Dorsolateral prefrontal cortex (tissue), 120 donors: ENCODE measurements at regions of chr2 and their contacts with region 1.

Region 1: DNA sequence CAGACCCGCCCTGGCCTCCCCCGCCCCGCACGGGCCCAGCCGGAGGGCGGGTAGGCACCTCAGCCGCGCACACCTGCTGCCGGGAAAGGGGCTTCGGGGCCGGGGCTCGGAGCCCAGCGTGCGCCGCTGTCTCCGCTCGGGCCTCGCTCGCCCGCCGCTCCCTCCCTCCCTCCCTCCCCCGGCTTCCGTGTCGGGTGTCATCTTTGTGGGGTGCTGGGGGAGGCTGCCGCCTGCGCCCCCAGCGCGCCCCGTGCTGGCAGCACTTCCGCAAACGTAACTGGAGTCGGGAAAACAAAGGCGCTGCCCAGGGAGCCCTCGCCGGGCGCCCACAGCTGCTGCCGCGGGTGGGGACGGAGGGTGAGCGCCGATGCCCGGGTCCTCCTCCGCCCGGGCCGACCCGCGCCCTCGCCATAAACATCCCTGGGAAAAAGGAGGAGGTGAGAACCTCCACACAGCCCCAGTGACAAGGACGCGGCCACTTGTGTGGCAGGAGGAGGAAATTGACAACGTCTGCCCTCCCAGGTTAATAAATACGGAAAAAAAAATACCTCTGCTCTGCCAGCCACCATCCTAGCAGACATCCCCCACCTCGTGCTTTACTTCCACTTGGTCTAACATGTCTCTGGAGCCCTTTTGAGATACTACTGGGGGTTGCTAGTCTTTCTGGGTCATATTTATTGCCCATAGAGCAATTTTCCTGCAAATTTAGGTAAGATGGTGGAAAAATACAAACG is 550 bp downstream of the MFSD6 start:
- DNase-seq: peak; percentile 45 to 87 (median 78)
- H3K4me3 ChIP-seq: peak overlapping the region; percentile 61 to 91 (median 79)
- H3K27ac ChIP-seq: peak overlapping the region; percentile 72 to 100 (median 97)
- H3K27me3 ChIP-seq: no peaks in the 10 kb centered on the region
- CTCF ChIP-seq: peak in 21 of 56 donors; percentile 4 to 31 (median 20)

Region 2: GRCh38 chr2:189966481-189966880 is 442.2 kb before region 1 on chr2:
- intact Hi-C with region 1: no loop called
- DNase-seq: no peak
- H3K4me3 ChIP-seq: no peak overlapping the region
- H3K27ac ChIP-seq: no peak overlapping the region
- H3K27me3 ChIP-seq: no peaks in the 10 kb centered on the region
- CTCF ChIP-seq: no peak

Region 3: DNA sequence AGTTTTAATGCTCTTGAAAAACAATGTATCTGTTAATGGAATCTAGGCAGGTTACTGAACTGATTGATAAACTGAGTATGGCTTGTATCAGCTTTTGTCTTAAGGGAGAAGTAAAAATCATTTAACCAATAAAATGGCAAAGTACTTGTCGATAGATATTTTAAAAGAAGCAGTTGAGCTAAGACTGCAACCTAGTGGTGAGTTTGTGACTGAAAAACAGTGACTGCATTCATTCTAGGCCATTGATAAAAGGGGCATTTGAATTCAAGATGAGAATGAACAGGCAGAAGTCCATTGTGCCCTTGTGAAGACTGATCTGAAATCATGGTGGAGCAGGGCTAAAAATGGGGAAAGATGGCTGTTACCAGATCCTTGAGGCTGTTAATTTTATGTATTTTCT is 286.7 kb before region 1 on chr2:
- intact Hi-C with region 1: no loop called
- DNase-seq: no peak
- H3K4me3 ChIP-seq: no peak overlapping the region
- H3K27ac ChIP-seq: peak overlapping the region in 48 of 59 donors; percentile 1 to 85 (median 62)
- H3K27me3 ChIP-seq: no peaks in the 10 kb centered on the region
- CTCF ChIP-seq: peak; percentile 30 to 84 (median 63)

Region 4: GRCh38 chr2:190369635-190370034 is 39.1 kb before region 1 on chr2:
- intact Hi-C with region 1: loop called (anchors 5 kb)
- DNase-seq: no peak
- H3K4me3 ChIP-seq: no peak overlapping the region
- H3K27ac ChIP-seq: peak overlapping the region in 34 of 59 donors; percentile 1 to 84 (median 66)
- H3K27me3 ChIP-seq: no peaks in the 10 kb centered on the region
- CTCF ChIP-seq: no peak

Region 5: DNA sequence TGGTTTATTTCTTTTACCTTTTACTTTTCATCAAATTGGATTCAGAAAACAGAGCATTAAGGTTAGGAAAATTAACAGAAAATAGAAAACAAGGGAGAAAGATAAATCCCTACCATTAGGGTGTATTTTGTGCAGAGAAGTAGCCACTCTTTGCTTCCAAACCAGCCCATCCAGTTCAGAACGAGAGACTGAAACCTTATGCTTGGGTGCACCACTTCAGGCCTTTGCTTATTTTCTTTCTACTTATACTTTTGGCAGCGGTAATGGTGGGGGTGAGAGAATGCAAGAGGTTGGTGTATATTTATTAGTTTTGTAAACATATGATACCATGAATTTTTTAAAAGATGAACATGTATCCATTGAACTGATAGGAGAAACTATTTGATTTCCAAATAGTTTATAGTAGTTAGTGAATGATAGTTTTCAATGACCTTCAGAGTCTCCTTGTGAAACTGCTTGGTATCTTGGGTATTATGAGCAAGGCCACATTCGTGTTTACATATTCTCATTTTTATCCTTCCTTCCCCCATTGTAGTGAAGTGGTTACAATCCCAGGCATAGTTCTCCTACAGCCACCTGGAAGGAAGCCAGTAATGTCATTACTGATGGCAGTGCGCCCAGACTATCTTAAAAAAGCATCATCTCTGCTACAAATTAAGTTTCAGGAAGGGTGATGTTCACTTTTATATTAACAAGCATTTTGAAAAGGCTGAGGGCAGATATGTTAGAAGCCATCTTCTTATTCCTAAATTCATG is 60.3 kb after region 1 on chr2:
- intact Hi-C with region 1: loop called in 1 of 2 experiments (anchors 5 kb)
- DNase-seq: peak in 8 of 10 donors; percentile 31 to 81 (median 64)
- H3K4me3 ChIP-seq: peak overlapping the region in 13 of 59 donors; percentile 3 to 37 (median 13)
- H3K27ac ChIP-seq: peak overlapping the region; percentile 4 to 92 (median 85)
- H3K27me3 ChIP-seq: no peaks in the 10 kb centered on the region
- CTCF ChIP-seq: peak in 3 of 56 donors; percentile 10 to 16 (median 14)

Region 6: GRCh38 chr2:190500054-190500502 is 91.4 kb after region 1 on chr2:
- intact Hi-C with region 1: loop called (anchors 5 to 10 kb)
- DNase-seq: peak in 1 of 10 donors; percentile 11
- H3K4me3 ChIP-seq: peak overlapping the region in 6 of 59 donors; percentile 6 to 41 (median 18)
- H3K27ac ChIP-seq: peak overlapping the region in 53 of 59 donors; percentile 4 to 85 (median 56)
- H3K27me3 ChIP-seq: no peaks in the 10 kb centered on the region
- CTCF ChIP-seq: no peak

Region 7: GRCh38 chr2:190880378-190881073 is 471.8 kb after region 1 on chr2 and contains the start of gene GLS:
- intact Hi-C with region 1: loop called in 1 of 2 experiments (anchors 10 kb)
- DNase-seq: peak; percentile 94 to 99 (median 98)
- H3K4me3 ChIP-seq: peak within 1 kb of the TSS; percentile 72 to 98 (median 89)
- H3K27ac ChIP-seq: peak within 1 kb of the TSS; percentile 76 to 99 (median 96)
- H3K27me3 ChIP-seq: no peaks in the 10 kb centered on the region
- CTCF ChIP-seq: peak in 1 of 56 donors; percentile 12
- total RNA-seq, gene GLS: 130 to 387 (median 309) TPM